H1 (cell line): ENCODE measurements at regions of chr11 and their contacts with region 1.

Region 1: GRCh38 chr11:116499396-116500003 is 273.3 kb downstream of the BUD13 start:
- DNase-seq: peak; percentile 87 to 99
- H3K4me3 ChIP-seq: no peak overlapping the region
- H3K27ac ChIP-seq: no peak overlapping the region
- H3K4me1 ChIP-seq: peaks cover 11 to 27% (median 15%) of the 10 kb centered on the region in 4 experiments
- H3K27me3 ChIP-seq: peaks cover 0 to 4% (median 1%) of the 10 kb centered on the region in 4 experiments; a peak in 2 of 7 replicates
- CTCF ChIP-seq: peak; percentile 74 to 91 (median 83)
- EP300 ChIP-seq: no peak
- POLR2A ChIP-seq: no peak
- RAD21 ChIP-seq: peak; percentile 85 to 94

Region 2: DNA sequence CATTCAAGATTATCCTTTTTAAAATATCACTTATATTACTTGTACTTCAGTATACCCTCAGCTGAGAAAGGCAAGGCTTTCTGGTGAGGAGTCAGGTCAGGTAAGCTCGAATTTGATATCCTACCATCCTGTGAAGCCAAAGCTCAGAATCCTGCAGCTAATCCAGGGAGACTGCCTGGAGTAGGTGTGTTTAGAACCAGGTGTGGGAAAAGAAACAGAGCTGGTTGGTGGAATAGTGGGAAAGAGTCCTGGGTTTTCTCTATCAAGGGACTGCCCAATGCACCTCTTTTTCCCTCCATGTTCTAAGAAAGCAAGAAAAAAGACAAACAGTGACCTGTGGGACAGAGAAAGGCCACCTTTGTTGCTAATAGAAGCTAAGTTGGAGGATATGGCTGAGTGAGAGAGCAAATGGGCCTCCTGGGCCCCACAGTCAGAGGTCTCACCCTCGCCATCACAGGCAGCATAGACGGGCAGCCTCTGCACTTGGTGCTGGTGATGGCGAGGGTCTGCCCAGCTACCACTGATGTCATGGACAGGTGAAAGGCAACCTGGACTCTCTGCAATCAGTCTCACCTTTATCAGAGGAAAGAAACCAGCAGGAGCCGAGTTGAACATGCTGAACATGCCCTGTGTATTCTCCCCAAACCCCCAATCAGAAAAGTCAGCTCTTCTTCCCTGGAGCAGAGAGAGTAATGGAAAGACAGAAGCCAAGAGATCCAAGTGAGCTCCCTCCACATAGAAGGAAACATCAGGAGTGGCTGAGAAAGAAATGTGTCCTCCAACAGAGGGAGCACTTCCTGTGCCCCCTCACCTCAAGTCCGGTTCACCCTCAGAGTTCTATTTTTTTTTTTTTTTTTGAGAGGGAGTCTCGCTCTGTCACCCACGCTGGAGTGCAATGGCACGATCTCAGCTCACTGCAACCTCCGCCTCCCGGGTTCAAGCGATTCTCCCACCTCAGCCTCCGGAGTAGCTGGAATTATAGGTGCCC is 218.0 kb before region 1 on chr11:
- CTCF ChIA-PET with region 1: interaction called, 30 read pairs
- POLR2A ChIA-PET with region 1: no interaction called
- DNase-seq: no peak
- H3K4me3 ChIP-seq: no peak overlapping the region
- H3K27ac ChIP-seq: no peak overlapping the region
- H3K4me1 ChIP-seq: no peaks in the 10 kb centered on the region
- H3K27me3 ChIP-seq: no peaks in the 10 kb centered on the region
- CTCF ChIP-seq: peak; percentile 41 to 53 (median 42)
- EP300 ChIP-seq: no peak
- POLR2A ChIP-seq: no peak
- RAD21 ChIP-seq: peak; percentile 44 to 50

Region 3: DNA sequence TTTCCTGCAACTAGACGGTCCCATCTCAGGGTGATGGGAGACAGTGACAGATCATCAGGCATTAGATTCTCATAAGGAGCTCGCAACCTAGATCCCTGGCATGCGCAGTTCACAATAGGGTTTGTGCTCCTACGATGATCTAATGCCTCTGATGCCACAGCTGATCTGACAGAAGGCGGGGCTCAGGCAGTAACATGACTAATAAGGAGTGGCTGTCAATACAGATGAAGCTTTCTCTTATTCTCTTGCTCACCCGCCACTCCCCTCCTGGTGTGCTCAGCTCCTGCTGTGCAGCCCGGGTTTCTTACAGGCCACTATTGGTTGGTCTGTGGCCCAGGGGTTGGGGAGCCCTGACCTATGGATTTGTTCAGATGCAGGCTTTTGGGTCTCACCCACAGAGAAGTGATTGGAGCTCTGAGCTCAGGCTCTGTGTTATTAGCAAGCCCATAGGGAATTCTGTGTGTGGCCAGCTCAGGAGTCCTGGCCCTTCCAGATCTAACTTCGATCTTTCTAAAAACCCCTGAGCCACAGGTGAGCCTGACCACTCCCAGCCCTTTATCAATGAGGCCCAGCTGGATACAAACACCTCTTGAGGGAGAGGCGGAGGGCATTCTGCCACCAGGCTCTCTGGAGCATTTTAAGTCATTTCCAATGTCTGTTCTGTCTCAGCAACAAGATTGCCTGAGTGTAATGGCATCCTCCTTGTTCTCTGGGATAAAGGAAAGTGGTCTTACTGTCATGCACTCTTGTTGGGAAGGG is 78.6 kb before region 1 on chr11:
- CTCF ChIA-PET with region 1: interaction called, 31 read pairs
- POLR2A ChIA-PET with region 1: no interaction called
- DNase-seq: no peak
- H3K4me3 ChIP-seq: no peak overlapping the region
- H3K27ac ChIP-seq: no peak overlapping the region
- H3K4me1 ChIP-seq: peaks cover 1 to 16% (median 7%) of the 10 kb centered on the region in 4 experiments; a peak in 5 of 7 replicates
- H3K27me3 ChIP-seq: no peaks in the 10 kb centered on the region
- CTCF ChIP-seq: no peak
- EP300 ChIP-seq: no peak
- POLR2A ChIP-seq: no peak
- RAD21 ChIP-seq: no peak

Region 4: DNA sequence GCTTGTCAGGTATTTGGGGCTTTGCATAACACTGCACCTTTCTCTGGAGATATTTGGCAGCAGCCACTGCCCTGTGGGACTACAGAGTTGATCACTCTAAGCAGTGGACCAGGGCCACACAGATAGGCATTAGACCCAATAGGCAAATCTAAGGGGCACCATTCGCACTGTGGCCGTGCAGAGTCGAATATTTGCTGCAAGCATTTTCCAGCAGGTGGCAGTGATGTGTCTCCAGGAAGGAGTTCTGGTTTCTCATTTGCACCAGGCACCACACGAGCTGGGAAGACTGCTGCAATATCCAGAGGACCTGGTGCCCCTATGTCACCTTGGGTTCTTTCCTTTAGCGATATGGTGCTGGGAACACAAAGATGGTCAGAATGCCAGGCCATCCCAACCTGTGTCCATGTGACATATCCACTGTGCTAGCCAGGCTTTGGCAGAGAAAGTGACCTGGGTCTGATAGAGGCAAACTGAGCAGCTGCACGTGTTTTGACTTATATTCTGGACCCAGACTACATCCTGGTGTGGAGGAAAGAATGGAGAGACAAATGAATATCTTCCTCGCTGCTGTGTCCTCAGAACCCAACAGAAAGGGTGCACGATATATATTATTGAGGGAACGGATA is 45.4 kb before region 1 on chr11:
- CTCF ChIA-PET with region 1: interaction called, 58 read pairs
- POLR2A ChIA-PET with region 1: interaction called, 3 read pairs
- DNase-seq: peak in 1 of 2 experiments; percentile 78
- H3K4me3 ChIP-seq: no peak overlapping the region
- H3K27ac ChIP-seq: no peak overlapping the region
- H3K4me1 ChIP-seq: peaks cover 0 to 11% (median 1%) of the 10 kb centered on the region in 4 experiments; a peak in 3 of 7 replicates
- H3K27me3 ChIP-seq: no peaks in the 10 kb centered on the region
- CTCF ChIP-seq: peak; percentile 75 to 84 (median 81)
- EP300 ChIP-seq: no peak
- POLR2A ChIP-seq: no peak
- RAD21 ChIP-seq: peak; percentile 70 to 87

Region 5: DNA sequence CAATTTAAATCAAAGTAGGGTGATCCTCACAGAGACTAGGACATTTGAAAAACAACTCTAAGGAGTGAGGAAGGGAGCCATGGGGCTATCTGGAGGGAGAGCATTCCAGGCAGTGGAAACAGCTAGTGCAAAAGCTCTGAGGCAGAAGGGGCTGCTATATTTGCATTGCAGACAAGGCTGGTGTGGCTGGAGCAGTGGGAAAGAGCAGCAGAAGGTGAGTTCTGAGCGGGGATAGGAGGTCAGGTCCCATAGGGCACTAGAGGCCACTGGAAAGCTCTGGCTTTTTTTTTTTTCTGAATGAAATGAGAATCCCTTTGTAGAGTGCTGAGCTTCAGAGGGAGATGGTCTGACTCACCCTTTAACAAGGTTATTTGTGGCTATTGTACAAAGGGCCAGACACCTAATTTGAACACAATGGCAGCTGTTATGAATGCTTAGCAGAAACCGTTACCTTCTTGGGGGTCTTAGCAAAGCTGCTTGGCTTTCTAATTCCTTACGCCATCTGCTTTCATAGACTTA is 18.3 kb before region 1 on chr11:
- CTCF ChIA-PET with region 1: interaction called, 14 read pairs
- POLR2A ChIA-PET with region 1: no interaction called
- DNase-seq: no peak
- H3K4me3 ChIP-seq: no peak overlapping the region
- H3K27ac ChIP-seq: no peak overlapping the region
- H3K4me1 ChIP-seq: no peaks in the 10 kb centered on the region
- H3K27me3 ChIP-seq: no peaks in the 10 kb centered on the region
- CTCF ChIP-seq: no peak
- EP300 ChIP-seq: no peak
- POLR2A ChIP-seq: no peak
- RAD21 ChIP-seq: no peak

Region 6: GRCh38 chr11:116691771-116692177 is 192.3 kb after region 1 on chr11:
- CTCF ChIA-PET with region 1: interaction called, 22 read pairs
- POLR2A ChIA-PET with region 1: no interaction called
- DNase-seq: peak in 1 of 2 experiments; percentile 95
- H3K4me3 ChIP-seq: no peak overlapping the region
- H3K27ac ChIP-seq: no peak overlapping the region
- H3K4me1 ChIP-seq: peaks cover 10 to 26% (median 19%) of the 10 kb centered on the region in 4 experiments
- H3K27me3 ChIP-seq: no peaks in the 10 kb centered on the region; a peak in 1 of 7 replicates
- CTCF ChIP-seq: peak; percentile 93 to 95 (median 93)
- EP300 ChIP-seq: no peak
- POLR2A ChIP-seq: no peak
- RAD21 ChIP-seq: peak; percentile 99